Caco-2 (cell line): ENCODE measurements at regions of chr2 and their contacts with region 1.

Region 1: DNA sequence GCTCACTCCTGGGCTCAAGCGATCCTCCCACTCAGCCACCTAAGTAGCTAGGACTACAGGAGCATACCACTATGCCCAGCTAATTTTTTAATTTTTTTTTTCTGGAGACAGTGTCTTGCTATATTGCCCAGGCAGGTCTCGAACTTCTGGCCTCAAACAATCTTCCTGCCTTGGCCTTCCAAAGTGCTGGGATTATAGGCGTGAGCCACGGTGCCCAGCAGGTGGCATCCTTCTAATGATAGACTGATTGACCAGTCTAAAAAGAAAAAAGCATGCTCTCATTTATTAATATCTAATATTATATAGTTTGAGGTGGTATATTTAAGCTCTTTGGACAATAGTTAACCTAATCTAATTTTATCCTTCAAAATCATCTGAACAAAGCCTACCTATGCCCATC is 198.6 kb downstream of the CAMKMT start:
- DNase-seq: peak; percentile 42 to 47
- H3K4me3 ChIP-seq: no peak overlapping the region
- H3K4me3 Mint-ChIP-seq: no peak overlapping the region
- H3K27ac Mint-ChIP-seq: peak overlapping the region; percentile 1
- H3K4me1 ChIP-seq: peaks cover 12% of the 10 kb centered on the region
- H3K4me1 Mint-ChIP-seq: peaks cover 16% of the 10 kb centered on the region
- H3K27me3 ChIP-seq: no peaks in the 10 kb centered on the region
- H3K27me3 Mint-ChIP-seq: no peaks in the 10 kb centered on the region
- CTCF ChIP-seq: peak; percentile 22 to 25

Region 2: DNA sequence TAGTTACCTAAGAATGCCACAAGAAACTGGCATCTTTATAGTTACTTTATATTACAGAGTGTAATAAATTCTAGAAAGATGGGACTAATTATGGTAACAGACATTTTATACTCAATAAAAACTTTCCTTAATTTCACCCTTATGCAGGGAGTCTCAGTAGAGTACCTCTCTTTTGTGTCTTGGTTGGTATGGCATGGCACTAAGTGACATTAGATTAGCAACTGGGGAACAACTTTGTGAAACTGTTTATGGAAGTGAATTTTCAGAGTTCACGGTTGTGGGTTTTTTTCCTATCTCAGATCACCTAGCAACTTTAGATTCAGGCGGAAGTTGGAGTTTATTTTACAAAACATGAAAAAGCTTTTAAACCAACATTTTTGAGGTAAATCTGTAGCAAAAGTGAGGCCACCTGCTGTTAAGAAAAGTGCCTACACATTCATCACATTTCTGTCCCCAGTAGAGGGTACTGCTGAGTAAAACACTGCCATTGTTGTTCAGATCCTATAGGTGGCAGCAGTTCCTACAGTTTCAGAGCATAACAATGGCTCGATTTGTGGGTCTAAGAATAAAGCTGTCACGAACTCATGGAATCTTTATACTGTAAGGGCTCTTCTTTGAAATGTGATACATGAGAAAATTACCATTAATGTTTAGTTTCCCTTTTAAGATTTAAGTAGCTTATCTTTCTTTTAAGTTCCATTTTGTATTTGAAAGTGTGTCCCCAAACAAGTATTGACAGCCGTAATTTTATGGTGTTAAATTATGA is 81.0 kb before region 1 on chr2:
- CTCF ChIA-PET with region 1: no interaction called
- POLR2A ChIA-PET with region 1: no interaction called
- intact Hi-C with region 1: no loop called
- DNase-seq: peak; percentile 54 to 79
- H3K4me3 ChIP-seq: no peak overlapping the region
- H3K4me3 Mint-ChIP-seq: no peak overlapping the region
- H3K27ac Mint-ChIP-seq: no peak overlapping the region
- H3K4me1 ChIP-seq: no peaks in the 10 kb centered on the region
- H3K4me1 Mint-ChIP-seq: no peaks in the 10 kb centered on the region
- H3K27me3 ChIP-seq: no peaks in the 10 kb centered on the region
- H3K27me3 Mint-ChIP-seq: no peaks in the 10 kb centered on the region
- CTCF ChIP-seq: peak; percentile 99 to 100

Region 3: DNA sequence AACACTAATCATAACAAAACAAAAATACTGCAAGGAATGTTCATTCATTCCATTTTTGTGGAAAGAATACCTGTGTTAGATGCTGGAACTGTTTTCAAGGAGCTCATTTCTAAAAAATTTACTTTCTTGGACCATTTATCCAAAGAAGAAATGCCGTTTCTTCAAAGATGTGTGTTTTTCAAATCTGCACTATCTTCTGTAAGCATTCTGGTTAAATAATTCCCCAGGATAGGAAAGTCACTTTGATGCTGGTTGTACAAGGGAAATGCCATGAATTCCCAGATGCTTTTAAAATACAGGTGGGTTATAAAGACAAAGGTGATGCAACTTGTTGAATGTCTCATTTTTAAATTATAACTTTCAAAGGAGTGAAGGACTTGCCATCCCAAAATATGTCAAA is 16.5 kb after region 1 on chr2:
- CTCF ChIA-PET with region 1: interaction called, 3 read pairs
- POLR2A ChIA-PET with region 1: no interaction called
- intact Hi-C with region 1: loop called (anchors 2 kb)
- DNase-seq: peak in 1 of 2 experiments; percentile 25
- H3K4me3 ChIP-seq: no peak overlapping the region
- H3K4me3 Mint-ChIP-seq: peak overlapping the region; percentile 56
- H3K27ac Mint-ChIP-seq: peak overlapping the region; percentile 74
- H3K4me1 ChIP-seq: peaks cover 62% of the 10 kb centered on the region
- H3K4me1 Mint-ChIP-seq: peaks cover 47% of the 10 kb centered on the region
- H3K27me3 ChIP-seq: no peaks in the 10 kb centered on the region
- H3K27me3 Mint-ChIP-seq: no peaks in the 10 kb centered on the region
- CTCF ChIP-seq: no peak

Region 4: DNA sequence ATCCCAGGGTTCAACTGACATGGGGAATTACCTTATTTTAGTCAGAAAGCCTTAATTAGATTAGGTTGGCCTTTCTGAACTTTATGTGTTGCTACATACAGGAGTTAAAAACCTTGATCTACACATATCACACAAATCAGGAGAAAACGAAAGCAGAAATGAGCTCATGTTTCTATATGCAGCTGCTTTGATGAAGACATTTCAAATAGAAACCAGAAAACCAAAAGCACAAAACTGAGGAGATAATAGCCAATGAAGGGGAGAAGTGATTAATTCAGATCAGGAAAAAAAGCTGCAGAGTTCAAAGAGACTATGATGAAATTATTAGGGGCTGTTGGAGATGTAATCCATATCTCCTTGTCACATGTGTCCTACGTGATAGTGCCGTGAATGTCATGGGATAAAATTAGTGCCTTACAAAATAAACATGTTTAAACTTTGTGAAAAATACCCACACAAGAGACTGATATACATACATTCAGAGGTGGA is 56.4 kb after region 1 on chr2:
- CTCF ChIA-PET with region 1: no interaction called
- POLR2A ChIA-PET with region 1: no interaction called
- intact Hi-C with region 1: loop called (anchors 5 kb)
- DNase-seq: no peak
- H3K4me3 ChIP-seq: no peak overlapping the region
- H3K4me3 Mint-ChIP-seq: no peak overlapping the region
- H3K27ac Mint-ChIP-seq: no peak overlapping the region
- H3K4me1 ChIP-seq: no peaks in the 10 kb centered on the region
- H3K4me1 Mint-ChIP-seq: peaks cover 14% of the 10 kb centered on the region
- H3K27me3 ChIP-seq: no peaks in the 10 kb centered on the region
- H3K27me3 Mint-ChIP-seq: no peaks in the 10 kb centered on the region
- CTCF ChIP-seq: no peak